Right ventricle myocardium inferior (tissue), 1 donor: ENCODE measurements at regions of chr6 and their contacts with region 1.

Region 1: GRCh38 chr6:137756783-137757182 is 110.3 kb upstream of the TNFAIP3 start:
- DNase-seq: no peak
- ATAC-seq: no peak

Region 2: GRCh38 chr6:137767911-137768690 is 11.3 kb after region 1 on chr6:
- intact Hi-C with region 1: loop called (anchors 1 kb)
- DNase-seq: no peak
- ATAC-seq: no peak